B cell (primary cell): ENCODE measurements at regions of chr4 and their contacts with region 1.

Region 1: DNA sequence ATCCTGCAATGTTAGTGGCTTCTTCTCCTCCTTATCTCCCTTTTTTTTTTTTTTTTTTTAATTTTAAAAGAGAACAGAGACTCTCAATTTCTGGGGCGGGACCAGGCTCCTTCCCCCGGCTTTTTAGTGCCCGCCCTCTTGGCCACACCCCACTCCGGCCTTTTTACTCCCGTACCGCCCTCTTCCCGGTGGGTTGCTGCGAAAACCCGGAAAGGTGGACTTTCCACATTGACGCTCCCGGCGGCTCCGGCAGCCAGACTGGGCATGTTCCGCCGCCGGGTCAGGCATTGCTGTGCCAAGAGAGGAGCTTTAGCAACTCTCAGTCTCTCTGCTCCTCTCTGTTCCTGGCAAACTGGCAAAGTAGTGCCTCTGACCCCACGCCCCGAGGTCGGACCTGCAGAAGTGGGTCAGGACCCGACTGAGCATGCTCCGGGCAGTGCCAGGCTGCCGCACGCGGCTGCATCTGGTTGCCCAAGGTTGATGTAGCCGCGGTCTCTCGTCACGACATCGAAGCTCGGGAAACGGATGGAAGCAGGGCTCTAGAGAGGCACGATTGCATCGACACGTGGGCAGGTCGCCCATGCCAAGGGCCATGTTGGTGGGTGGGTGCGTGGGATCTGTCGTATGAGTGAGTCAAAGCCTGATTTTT is 1.1 kb upstream of the MFAP3L start:
- DNase-seq: peak; percentile 94
- ATAC-seq: peak; percentile 76
- H3K4me3 ChIP-seq: peak overlapping the region; percentile 52 to 95 (median 81)
- H3K4me3 Mint-ChIP-seq: peak overlapping the region; percentile 92
- H3K27ac ChIP-seq: no peak overlapping the region
- H3K27ac Mint-ChIP-seq: peak overlapping the region; percentile 80
- H3K4me1 ChIP-seq: peaks cover 11 to 16% of the 10 kb centered on the region in 2 donors
- H3K4me1 Mint-ChIP-seq: peaks cover 12% of the 10 kb centered on the region
- H3K27me3 ChIP-seq: peaks cover 0 to 25% (median 8%) of the 10 kb centered on the region in 4 experiments
- H3K27me3 Mint-ChIP-seq: peaks cover 29% of the 10 kb centered on the region
- CTCF ChIP-seq: no peak

Region 2: GRCh38 chr4:168480931-168481611 is 1546.2 kb before region 1 on chr4:
- CTCF ChIA-PET with region 1: no interaction called
- POLR2A ChIA-PET with region 1: no interaction called
- intact Hi-C with region 1: loop called (anchors 2 kb)
- DNase-seq: peak; percentile 78
- ATAC-seq: peak; percentile 43
- H3K4me3 ChIP-seq: peak overlapping the region; percentile 86 to 97 (median 91)
- H3K4me3 Mint-ChIP-seq: peak overlapping the region; percentile 98
- H3K27ac ChIP-seq: peak overlapping the region; percentile 88 to 92
- H3K27ac Mint-ChIP-seq: peak overlapping the region; percentile 98
- H3K4me1 ChIP-seq: peaks cover 12% of the 10 kb centered on the region in 2 donors
- H3K4me1 Mint-ChIP-seq: peaks cover 44% of the 10 kb centered on the region
- H3K27me3 ChIP-seq: no peaks in the 10 kb centered on the region
- H3K27me3 Mint-ChIP-seq: peaks cover 5% of the 10 kb centered on the region
- CTCF ChIP-seq: no peak

Region 3: GRCh38 chr4:169210504-169211118 is 816.7 kb before region 1 on chr4:
- CTCF ChIA-PET with region 1: no interaction called
- POLR2A ChIA-PET with region 1: no interaction called
- intact Hi-C with region 1: loop called (anchors 5 kb)
- DNase-seq: peak; percentile 81
- ATAC-seq: peak; percentile 85
- H3K4me3 ChIP-seq: peak overlapping the region in 2 of 5 experiments; percentile 18 to 36
- H3K4me3 Mint-ChIP-seq: peak overlapping the region; percentile 83
- H3K27ac ChIP-seq: peak overlapping the region; percentile 74 to 76
- H3K27ac Mint-ChIP-seq: peak overlapping the region; percentile 92
- H3K4me1 ChIP-seq: peaks cover 24 to 29% of the 10 kb centered on the region in 2 donors
- H3K4me1 Mint-ChIP-seq: peaks cover 43% of the 10 kb centered on the region
- H3K27me3 ChIP-seq: no peaks in the 10 kb centered on the region
- H3K27me3 Mint-ChIP-seq: no peaks in the 10 kb centered on the region
- CTCF ChIP-seq: no peak

Region 4: DNA sequence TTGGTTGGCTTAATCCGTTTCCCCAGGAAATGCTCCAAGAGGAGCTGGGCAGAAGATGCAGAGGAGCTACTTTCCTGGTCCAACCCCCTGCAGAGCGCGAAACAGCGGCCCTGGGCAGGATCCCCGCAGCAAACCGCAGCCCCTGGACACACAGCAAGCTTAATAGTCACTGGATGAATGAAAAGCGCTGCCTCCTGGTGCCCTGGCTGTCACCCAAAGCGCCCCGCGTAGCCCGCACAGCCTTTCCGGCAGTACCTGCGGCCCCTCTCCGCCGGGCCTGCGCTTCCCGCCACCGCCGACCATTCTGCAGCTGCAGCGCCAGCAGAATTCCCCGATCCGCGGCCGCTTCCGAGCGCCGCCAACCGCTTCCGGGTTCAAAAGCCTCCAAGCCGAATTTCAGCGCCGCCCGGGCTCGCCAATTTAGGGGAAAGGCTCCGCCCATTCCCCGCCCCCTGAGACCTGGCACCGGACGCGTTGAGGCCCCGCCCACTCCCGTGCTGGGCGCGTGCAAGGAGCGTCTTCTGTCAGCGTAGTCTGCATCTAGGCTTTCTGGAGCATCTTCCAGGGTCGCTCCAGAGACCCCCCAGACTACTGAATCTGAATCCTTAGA is 269.6 kb before region 1 on chr4 and contains the start of gene HPF1:
- CTCF ChIA-PET with region 1: no interaction called
- POLR2A ChIA-PET with region 1: no interaction called
- intact Hi-C with region 1: loop called (anchors 2 kb)
- DNase-seq: peak; percentile 94
- ATAC-seq: peak; percentile 99
- H3K4me3 ChIP-seq: peak within 1 kb of the TSS; percentile 50 to 91 (median 86)
- H3K4me3 Mint-ChIP-seq: peak within 1 kb of the TSS; percentile 96
- H3K27ac ChIP-seq: peak within 1 kb of the TSS; percentile 1 to 50
- H3K27ac Mint-ChIP-seq: peak within 1 kb of the TSS; percentile 79
- H3K4me1 ChIP-seq: peaks cover 14 to 20% of the 10 kb centered on the region in 2 donors
- H3K4me1 Mint-ChIP-seq: peaks cover 21% of the 10 kb centered on the region
- H3K27me3 ChIP-seq: no peaks in the 10 kb centered on the region
- H3K27me3 Mint-ChIP-seq: no peaks in the 10 kb centered on the region
- CTCF ChIP-seq: no peak
- total RNA-seq, gene HPF1: 9.9 and 15.2 TPM in 2 replicates

Region 5: GRCh38 chr4:169902658-169903345 is 124.5 kb before region 1 on chr4:
- CTCF ChIA-PET with region 1: no interaction called
- POLR2A ChIA-PET with region 1: no interaction called
- intact Hi-C with region 1: no loop called
- DNase-seq: no peak
- ATAC-seq: no peak
- H3K4me3 ChIP-seq: no peak overlapping the region
- H3K4me3 Mint-ChIP-seq: no peak overlapping the region
- H3K27ac ChIP-seq: no peak overlapping the region
- H3K27ac Mint-ChIP-seq: no peak overlapping the region
- H3K4me1 ChIP-seq: no peaks in the 10 kb centered on the region
- H3K4me1 Mint-ChIP-seq: no peaks in the 10 kb centered on the region
- H3K27me3 ChIP-seq: no peaks in the 10 kb centered on the region
- H3K27me3 Mint-ChIP-seq: peaks cover 4% of the 10 kb centered on the region
- CTCF ChIP-seq: no peak